ENCODE measurements at regions of chr6 and their contacts with region 1.

Region 1: DNA sequence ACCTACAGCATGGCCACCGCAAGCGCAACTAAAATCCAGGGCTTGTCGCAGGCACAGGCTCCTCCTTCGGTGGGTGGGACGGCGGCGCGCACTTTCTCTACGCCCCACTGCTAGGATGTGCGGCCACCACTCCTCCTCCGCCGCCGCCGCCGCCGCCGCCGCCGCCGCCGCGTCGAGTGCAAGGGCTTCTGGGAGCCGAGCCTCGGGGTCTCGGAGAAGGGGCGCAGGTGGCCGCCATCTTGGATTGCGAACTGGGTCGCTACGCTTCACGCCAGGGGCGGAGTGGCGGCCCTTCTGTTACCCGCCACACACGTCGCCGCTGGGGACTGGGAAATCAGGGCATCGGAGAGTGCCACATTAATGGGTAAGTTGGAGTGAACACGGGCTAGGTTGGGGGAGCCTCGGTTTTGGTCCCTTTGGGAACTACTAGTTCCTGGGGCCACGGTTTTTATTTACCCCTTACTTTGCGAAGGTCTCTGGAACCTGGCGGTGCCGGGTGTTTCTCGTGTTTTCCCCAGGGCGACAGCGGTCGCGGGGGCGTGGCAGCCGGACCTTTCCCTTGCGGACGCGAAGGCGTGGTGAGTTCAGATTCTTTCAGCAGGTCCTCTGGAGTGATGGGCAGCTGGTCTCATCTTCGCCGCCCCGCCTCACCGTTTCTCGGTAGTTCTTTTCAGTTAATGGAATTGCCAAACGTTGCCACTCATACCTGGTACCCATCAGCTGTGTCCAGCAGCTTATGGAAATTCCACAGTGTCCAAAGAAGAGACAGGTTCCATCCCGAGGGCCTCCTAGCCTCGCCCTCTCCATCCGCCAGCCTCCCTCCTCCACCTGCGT is at the start of gene KPNA5:
- DNase-seq: peak; percentile 76 to 95 (median 90)
- ATAC-seq: peak; percentile 93 to 97 (median 96)
- H3K4me3 ChIP-seq: peak within 1 kb of the TSS; percentile 92 to 93
- H3K4me3 Mint-ChIP-seq: peak within 1 kb of the TSS; percentile 94 to 99 (median 97)
- H3K27ac ChIP-seq: peak within 1 kb of the TSS; percentile 95
- H3K27ac Mint-ChIP-seq: peak within 1 kb of the TSS; percentile 99
- H3K4me1 ChIP-seq: peaks cover 5 to 17% of the 10 kb centered on the region in 2 experiments
- H3K4me1 Mint-ChIP-seq: peaks cover 53 to 62% (median 54%) of the 10 kb centered on the region in 3 donors
- H3K27me3 ChIP-seq: no peaks in the 10 kb centered on the region
- H3K27me3 Mint-ChIP-seq: no peaks in the 10 kb centered on the region
- total RNA-seq, gene KPNA5: 41.3 to 57.3 (median 45.6) TPM

Region 2: GRCh38 chr6:116387374-116387773 is 293.8 kb before region 1 on chr6:
- CTCF ChIA-PET with region 1: no interaction called
- POLR2A ChIA-PET with region 1: no interaction called
- DNase-seq: peak in 1 of 35 experiments; percentile 10
- ATAC-seq: no peak
- H3K4me3 ChIP-seq: no peak overlapping the region
- H3K4me3 Mint-ChIP-seq: no peak overlapping the region
- H3K27ac ChIP-seq: no peak overlapping the region
- H3K27ac Mint-ChIP-seq: peak overlapping the region; percentile 24 to 68
- H3K4me1 ChIP-seq: peaks cover 0 to 4% of the 10 kb centered on the region in 2 experiments
- H3K4me1 Mint-ChIP-seq: peaks cover 5 to 29% (median 18%) of the 10 kb centered on the region in 3 donors
- H3K27me3 ChIP-seq: no peaks in the 10 kb centered on the region
- H3K27me3 Mint-ChIP-seq: peaks cover 0 to 7% of the 10 kb centered on the region in 2 donors

Region 3: DNA sequence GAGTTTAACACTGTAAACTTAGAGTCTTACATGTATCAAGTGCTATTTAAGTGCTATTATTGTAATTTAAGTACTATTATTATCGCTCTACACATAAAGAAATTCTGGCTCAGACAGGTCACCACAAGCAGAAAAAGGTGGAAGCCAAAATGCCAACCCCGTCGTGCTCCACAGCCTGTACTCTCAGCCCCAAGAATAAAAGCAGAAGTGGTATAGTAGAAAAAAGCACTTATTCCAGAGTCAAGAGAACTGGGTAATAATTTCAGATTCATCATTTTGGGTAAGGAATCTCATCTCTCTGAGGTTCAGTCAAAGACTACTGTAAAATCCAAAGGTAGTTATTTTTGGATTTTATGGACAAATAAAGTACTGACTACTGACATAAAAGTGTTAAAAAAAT is 13.6 kb before region 1 on chr6:
- CTCF ChIA-PET with region 1: interaction called in 1 of 2 experiments, 4 read pairs
- POLR2A ChIA-PET with region 1: interaction called, 3 to 12 read pairs
- DNase-seq: no peak
- ATAC-seq: no peak
- H3K4me3 ChIP-seq: peak overlapping the region; percentile 83 to 98
- H3K4me3 Mint-ChIP-seq: peak overlapping the region; percentile 86 to 99 (median 97)
- H3K27ac ChIP-seq: no peak overlapping the region
- H3K27ac Mint-ChIP-seq: peak overlapping the region in 1 of 2 donors; percentile 98
- H3K4me1 ChIP-seq: peaks cover 17 to 23% of the 10 kb centered on the region in 2 experiments
- H3K4me1 Mint-ChIP-seq: peaks cover 43 to 49% (median 44%) of the 10 kb centered on the region in 3 donors
- H3K27me3 ChIP-seq: peaks cover 0 to 3% of the 10 kb centered on the region in 2 experiments
- H3K27me3 Mint-ChIP-seq: peaks cover 10% of the 10 kb centered on the region in 2 donors